ENCODE measurements at regions of chr7 and their contacts with region 1.

Region 1: GRCh38 chr7:54781134-54781912 is 22.3 kb upstream of the SEC61G start:
- DNase-seq: peak; percentile 35 to 67
- H3K4me3 ChIP-seq: no peak overlapping the region
- H3K4me1 ChIP-seq: peaks cover 10% of the 10 kb centered on the region
- H3K27me3 ChIP-seq: no peaks in the 10 kb centered on the region

Region 2: DNA sequence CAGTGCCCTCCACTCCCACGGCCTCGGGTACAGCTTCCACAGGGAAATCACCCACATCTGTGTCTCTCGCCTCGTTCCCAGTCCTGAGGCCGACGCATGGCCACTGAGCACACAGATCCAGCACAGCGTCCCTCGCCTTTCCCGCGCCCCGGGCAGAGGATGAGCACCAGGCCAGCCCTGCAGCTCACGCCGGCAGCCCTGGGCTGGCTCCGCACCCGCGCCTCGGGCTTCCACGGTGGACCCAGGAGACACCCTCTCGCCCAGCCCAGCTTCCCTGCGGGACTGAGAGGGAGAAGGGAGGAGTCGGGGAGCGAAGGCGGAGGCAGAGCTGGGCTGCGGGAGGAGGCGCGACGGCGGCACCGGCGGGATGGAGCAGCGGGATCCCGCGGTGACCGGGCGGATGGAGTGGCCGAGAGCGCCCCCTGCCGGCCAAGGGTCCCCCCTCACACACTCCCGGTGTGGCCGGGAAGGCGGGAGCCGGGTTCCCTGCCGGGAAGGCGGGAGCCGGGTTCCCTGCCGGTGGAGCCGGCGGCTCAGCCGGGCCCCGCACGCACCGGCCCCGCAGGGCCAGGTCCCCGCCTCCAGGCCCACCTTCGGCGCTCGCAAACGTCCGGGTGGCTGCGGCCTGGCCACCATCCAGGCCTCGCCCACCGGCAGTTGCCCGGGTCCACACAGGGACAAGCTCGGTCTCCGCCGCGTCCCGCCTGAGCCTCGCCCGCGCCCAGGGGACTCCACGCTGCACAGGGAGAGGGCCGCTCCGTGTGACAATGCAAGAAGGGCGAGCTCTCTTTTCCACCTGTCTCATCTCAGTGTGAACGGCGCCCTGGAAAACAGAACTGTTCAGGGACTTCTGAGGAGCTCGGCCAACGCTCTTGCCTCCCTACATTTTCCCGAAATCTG is 473.5 kb after region 1 on chr7:
- in situ Hi-C with region 1: loop called (anchors 5 kb)
- DNase-seq: peak; percentile 68 to 88
- H3K4me3 ChIP-seq: peak overlapping the region; percentile 21
- H3K4me1 ChIP-seq: peaks cover 6% of the 10 kb centered on the region; the same call in 1 of the 2 replicates
- H3K27me3 ChIP-seq: peaks cover 4% of the 10 kb centered on the region

Measured in HAP-1 (cell line).